ENCODE measurements at regions of chr1 and their contacts with region 1.

Region 1: GRCh38 chr1:110106013-110106941 is 6.0 kb upstream of the UBL4B start:
- DNase-seq: no peak
- H3K4me3 ChIP-seq: no peak overlapping the region
- CTCF ChIP-seq: peak; percentile 92

Region 2: DNA sequence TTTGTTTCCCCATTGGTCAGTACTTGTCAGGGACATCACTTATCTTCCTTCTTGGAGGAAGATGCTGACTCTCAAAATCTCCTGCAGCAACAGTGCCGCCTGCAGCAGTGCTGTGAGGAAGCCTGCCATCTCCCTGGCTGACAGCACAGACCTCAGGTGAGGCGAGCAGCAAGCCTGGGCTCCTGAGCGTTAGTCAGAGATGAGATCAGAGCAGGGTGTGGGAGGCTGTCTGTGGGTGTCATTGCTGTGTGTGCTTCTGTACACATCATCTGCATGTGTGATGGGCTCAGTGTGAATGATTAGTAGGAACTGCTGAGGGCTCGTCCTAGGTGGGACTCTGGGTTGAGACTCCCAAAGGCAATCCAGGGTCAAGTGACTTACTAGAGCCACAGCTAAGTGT is 65.7 kb before region 1 on chr1:
- CTCF ChIA-PET with region 1: interaction called, 935 read pairs
- POLR2A ChIA-PET with region 1: no interaction called
- DNase-seq: no peak
- H3K4me3 ChIP-seq: no peak overlapping the region
- CTCF ChIP-seq: no peak

Region 3: GRCh38 chr1:110118636-110119615 is 12.6 kb after region 1 on chr1:
- CTCF ChIA-PET with region 1: interaction called, 156 read pairs
- POLR2A ChIA-PET with region 1: no interaction called
- DNase-seq: no peak
- H3K4me3 ChIP-seq: no peak overlapping the region
- CTCF ChIP-seq: no peak

Measured in AG04449 (cell line).